SK-N-SH (cell line): ENCODE measurements at regions of chr6 and their contacts with region 1.

Region 1: DNA sequence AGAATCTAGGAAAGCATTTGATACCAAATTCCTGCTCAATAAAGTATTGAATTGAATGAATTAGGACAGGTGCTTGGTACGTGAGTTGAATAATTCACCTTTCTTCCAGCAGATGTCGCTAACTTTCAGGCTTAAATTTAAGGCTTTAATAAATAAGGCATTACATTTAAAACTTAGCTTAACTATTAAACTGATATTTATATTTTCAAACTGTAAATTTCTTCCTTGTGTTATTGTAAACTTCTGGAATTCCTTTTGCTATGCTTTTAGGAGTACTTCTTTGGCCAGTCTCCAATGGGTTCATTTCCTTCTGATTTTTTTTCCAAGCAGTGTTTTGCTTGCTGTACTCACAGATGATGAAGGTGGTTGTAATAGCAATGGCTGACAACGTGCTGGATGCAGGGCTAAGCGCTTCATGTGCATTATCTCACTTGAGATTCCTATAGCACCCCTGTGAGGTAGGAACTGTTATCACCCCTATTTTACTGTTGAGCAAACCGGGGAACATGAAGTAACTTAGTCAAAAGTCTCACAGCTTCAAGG is 71.3 kb upstream of the SLC2A12 start:
- DNase-seq: peak; percentile 53
- H3K4me3 ChIP-seq: no peak overlapping the region; a peak in 1 of 4 replicates
- H3K27ac ChIP-seq: no peak overlapping the region
- H3K4me1 ChIP-seq: no peaks in the 10 kb centered on the region
- H3K27me3 ChIP-seq: no peaks in the 10 kb centered on the region
- CTCF ChIP-seq: peak; percentile 86
- EP300 ChIP-seq: no peak
- RAD21 ChIP-seq: peak; percentile 58

Region 2: GRCh38 chr6:133973109-133973971 is 150.4 kb before region 1 on chr6:
- CTCF ChIA-PET with region 1: no interaction called
- POLR2A ChIA-PET with region 1: no interaction called
- DNase-seq: peak; percentile 47
- H3K4me3 ChIP-seq: no peak overlapping the region
- H3K27ac ChIP-seq: peak overlapping the region in 1 of 2 experiments; percentile 1; a peak in 1 of 4 replicates
- H3K4me1 ChIP-seq: peaks cover 6 to 19% of the 10 kb centered on the region in 2 experiments; a peak in 2 of 4 replicates
- H3K27me3 ChIP-seq: no peaks in the 10 kb centered on the region
- CTCF ChIP-seq: peak; percentile 85
- EP300 ChIP-seq: no peak
- RAD21 ChIP-seq: peak; percentile 74

Region 3: DNA sequence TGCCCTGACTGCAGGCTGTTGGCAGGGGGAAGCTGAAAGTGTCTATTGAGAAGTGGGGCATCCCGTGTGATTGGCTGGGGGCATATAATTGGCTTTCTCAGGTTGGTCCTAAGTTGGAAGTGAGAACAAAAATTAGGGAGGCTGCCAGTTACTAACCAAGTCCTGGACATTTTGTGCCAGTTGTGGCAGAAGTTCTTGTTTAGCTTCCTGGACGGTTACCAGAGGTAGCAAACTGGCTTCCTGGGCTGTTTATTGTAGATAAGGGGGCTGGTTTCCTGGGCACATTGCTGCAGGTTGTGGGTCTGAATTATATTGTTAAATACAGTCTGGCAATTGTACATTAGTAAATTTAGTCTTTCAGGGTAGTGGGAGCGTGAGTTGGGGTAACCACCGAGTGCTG is 20.7 kb before region 1 on chr6:
- CTCF ChIA-PET with region 1: interaction called, 53 read pairs
- POLR2A ChIA-PET with region 1: no interaction called
- DNase-seq: no peak
- H3K4me3 ChIP-seq: no peak overlapping the region
- H3K27ac ChIP-seq: no peak overlapping the region
- H3K4me1 ChIP-seq: peaks cover 0 to 8% of the 10 kb centered on the region in 2 experiments; a peak in 2 of 4 replicates
- H3K27me3 ChIP-seq: no peaks in the 10 kb centered on the region; the same call in 1 of the 2 replicates
- CTCF ChIP-seq: no peak
- EP300 ChIP-seq: no peak
- RAD21 ChIP-seq: no peak

Region 4: DNA sequence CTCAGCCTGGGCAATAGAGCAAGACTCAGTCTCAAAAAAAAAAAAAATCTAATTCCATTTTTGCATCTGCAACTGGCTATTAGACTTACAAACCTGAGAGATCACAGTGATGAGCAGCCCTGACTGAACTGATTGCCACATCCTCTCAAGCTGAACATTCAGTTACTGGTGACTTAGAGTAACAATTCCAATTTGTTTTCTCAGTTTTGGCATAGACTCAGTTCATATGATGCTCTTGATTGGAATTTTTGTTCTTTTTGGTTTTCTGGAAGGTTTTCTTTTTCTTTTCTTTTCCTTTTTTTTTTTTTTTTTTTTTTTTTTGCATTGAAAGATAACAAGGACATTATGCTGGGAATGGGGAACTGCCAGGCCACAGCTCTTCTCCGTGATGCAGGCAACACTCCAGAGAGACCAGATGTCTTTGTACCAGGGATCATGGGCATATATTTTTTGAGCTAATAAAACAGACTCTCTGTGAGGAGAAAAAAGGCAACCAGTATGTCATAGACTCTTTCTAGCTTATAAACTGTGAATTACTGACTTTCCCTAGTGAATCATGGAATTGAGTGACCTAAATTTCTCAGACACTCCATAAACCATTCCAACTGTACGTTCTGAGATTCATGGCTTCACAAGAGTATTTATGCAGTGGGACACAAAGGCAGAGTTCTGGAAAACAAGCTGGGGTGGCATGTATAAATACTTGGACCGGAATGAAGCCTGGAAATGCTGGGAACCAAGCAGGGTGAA is 14.7 kb after region 1 on chr6:
- CTCF ChIA-PET with region 1: interaction called, 24 read pairs
- POLR2A ChIA-PET with region 1: no interaction called
- DNase-seq: no peak
- H3K4me3 ChIP-seq: no peak overlapping the region
- H3K27ac ChIP-seq: no peak overlapping the region
- H3K4me1 ChIP-seq: no peaks in the 10 kb centered on the region
- H3K27me3 ChIP-seq: no peaks in the 10 kb centered on the region
- CTCF ChIP-seq: no peak
- EP300 ChIP-seq: no peak
- RAD21 ChIP-seq: no peak

Region 5: GRCh38 chr6:134152767-134153485 is 29.2 kb after region 1 on chr6:
- CTCF ChIA-PET with region 1: interaction called, 27 read pairs
- POLR2A ChIA-PET with region 1: no interaction called
- DNase-seq: no peak
- H3K4me3 ChIP-seq: no peak overlapping the region
- H3K27ac ChIP-seq: no peak overlapping the region
- H3K4me1 ChIP-seq: peaks cover 0 to 2% of the 10 kb centered on the region in 2 experiments; a peak in 1 of 4 replicates
- H3K27me3 ChIP-seq: no peaks in the 10 kb centered on the region
- CTCF ChIP-seq: no peak
- EP300 ChIP-seq: no peak
- RAD21 ChIP-seq: no peak

Region 6: DNA sequence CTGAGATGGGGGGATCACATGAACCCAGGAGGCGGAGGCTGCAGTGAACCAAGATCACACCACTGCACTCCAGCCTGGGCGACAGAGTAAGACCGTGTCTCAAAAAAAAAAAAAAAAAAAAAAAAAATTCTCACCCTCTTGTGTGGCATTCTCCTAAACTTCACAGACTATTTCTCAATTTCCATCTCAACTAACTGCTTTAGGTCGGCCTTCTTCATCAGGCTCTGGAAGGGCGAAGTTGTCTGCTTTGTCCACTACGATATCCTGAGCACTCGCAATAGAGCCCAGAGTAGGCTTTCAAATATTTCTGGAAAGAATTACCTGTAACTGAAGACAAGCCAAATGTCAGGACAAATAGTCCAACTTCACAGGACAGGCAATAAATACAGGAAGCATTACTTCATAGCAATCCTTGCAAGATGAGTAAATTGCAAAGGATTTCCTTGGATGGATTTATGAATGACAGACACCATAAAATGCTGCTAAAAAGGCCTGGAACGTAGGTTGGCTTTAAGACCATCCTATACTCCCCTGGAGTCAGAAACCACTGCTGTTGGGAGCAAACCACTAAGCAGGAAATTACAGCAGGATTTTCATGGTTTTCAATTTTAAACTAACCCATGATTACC is 45.0 kb after region 1 on chr6:
- CTCF ChIA-PET with region 1: interaction called, 10 read pairs
- POLR2A ChIA-PET with region 1: no interaction called
- DNase-seq: no peak
- H3K4me3 ChIP-seq: no peak overlapping the region
- H3K27ac ChIP-seq: peak overlapping the region in 1 of 2 experiments; percentile 13; a peak in 1 of 4 replicates
- H3K4me1 ChIP-seq: peaks cover 16 to 43% of the 10 kb centered on the region in 2 experiments
- H3K27me3 ChIP-seq: no peaks in the 10 kb centered on the region
- CTCF ChIP-seq: no peak
- EP300 ChIP-seq: no peak
- RAD21 ChIP-seq: no peak

Region 7: GRCh38 chr6:134317471-134318131 is 193.9 kb after region 1 on chr6 and contains the start of gene SGK1:
- CTCF ChIA-PET with region 1: no interaction called
- POLR2A ChIA-PET with region 1: no interaction called
- DNase-seq: peak; percentile 59
- H3K4me3 ChIP-seq: peak within 1 kb of the TSS; percentile 74 to 81
- H3K27ac ChIP-seq: peak within 1 kb of the TSS in 1 of 2 experiments; percentile 28; a peak in 2 of 4 replicates
- H3K4me1 ChIP-seq: peaks cover 4% of the 10 kb centered on the region in 2 experiments; a peak in 2 of 4 replicates
- H3K27me3 ChIP-seq: no peaks in the 10 kb centered on the region
- CTCF ChIP-seq: no peak; the same call in 1 of the 2 replicates
- EP300 ChIP-seq: no peak
- RAD21 ChIP-seq: no peak
- polyA plus RNA-seq, gene SGK1: 440 and 472 TPM in 2 replicates

Region 8: GRCh38 chr6:134882426-134883038 is 758.8 kb after region 1 on chr6:
- CTCF ChIA-PET with region 1: interaction called, 11 read pairs
- POLR2A ChIA-PET with region 1: no interaction called
- DNase-seq: peak; percentile 44
- H3K4me3 ChIP-seq: no peak overlapping the region
- H3K27ac ChIP-seq: no peak overlapping the region
- H3K4me1 ChIP-seq: peaks cover 0 to 2% of the 10 kb centered on the region in 2 experiments; a peak in 1 of 4 replicates
- H3K27me3 ChIP-seq: no peaks in the 10 kb centered on the region
- CTCF ChIP-seq: peak; percentile 77
- EP300 ChIP-seq: no peak
- RAD21 ChIP-seq: peak; percentile 90